ENCODE measurements at regions of chr9 and their contacts with region 1.

Region 1: DNA sequence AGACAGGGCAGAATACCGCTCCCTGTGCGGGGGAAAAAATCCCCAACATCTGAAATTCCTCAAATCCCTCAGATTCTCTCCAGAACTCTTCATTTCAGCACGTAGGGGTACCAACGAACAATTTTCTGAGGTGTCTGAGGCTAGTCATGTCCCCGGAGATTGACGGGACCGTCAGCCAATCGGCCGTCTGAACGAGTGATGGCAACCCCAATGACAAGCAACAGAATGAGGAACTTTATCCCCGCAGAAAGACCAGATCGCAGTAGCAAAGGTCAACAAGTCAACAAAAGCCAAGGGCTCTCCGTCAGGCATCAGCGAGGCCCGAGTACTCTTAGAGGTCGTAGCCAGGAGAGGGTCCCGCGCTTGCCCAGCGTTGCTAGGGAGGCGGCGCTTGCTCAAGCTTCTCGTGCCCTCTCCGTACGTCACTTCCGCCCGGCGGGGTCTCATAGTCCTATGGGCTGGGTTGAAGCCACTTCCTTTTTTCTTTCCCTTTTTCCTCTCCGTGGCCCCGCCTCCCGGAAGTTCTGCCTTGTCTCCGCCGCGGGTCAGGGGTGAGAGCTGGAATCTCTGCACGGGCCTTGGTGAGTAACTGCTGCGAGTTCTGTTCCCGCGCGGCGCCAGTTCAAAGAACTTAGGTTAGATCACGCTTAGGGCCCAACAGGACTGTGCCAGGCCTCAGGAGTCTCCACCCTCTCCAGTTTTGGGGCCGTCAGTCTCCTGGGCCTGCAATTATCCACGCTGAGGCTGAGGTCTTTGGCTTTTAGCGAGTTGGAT is at the start of gene RNF20:
- DNase-seq: peak; percentile 99
- H3K4me3 Mint-ChIP-seq: peak within 1 kb of the TSS; percentile 93
- H3K27ac Mint-ChIP-seq: peak within 1 kb of the TSS; percentile 98
- H3K4me1 Mint-ChIP-seq: peaks cover 12% of the 10 kb centered on the region
- H3K27me3 Mint-ChIP-seq: peaks cover 3% of the 10 kb centered on the region
- total RNA-seq, gene RNF20: 37.9 and 43.8 TPM in 2 replicates

Region 2: DNA sequence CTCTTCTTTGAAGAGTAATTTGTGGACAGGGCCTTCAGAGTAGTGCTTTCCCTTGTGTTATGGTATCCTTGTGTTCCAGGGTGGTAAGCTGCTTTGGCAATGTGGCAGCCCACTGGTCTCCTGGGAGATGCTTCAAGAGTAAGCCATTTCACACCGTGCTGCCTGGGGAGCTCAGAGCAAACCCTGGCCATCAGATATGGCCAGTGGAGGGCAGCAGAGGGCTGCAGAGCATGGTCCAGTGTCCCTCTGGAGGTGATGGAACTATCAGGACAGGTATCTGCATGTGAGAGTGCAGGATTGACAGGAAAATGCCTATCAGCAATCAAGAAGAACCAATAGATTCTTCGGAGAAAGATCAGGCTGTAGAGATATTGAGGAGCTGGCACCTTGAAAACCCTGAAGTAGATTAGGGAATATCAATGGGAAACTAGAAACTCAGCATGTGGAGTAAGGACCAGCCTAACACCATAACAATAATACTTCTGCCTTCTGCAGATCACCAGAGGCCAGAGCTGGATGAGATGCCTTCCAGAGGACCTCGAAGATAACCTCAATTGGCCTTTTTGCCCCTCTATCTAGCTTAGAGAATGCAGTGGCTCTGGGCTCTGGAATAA is 414.2 kb before region 1 on chr9:
- intact Hi-C with region 1: loop called (anchors 5 kb)
- DNase-seq: peak; percentile 70
- H3K4me3 Mint-ChIP-seq: no peak overlapping the region
- H3K27ac Mint-ChIP-seq: no peak overlapping the region
- H3K4me1 Mint-ChIP-seq: no peaks in the 10 kb centered on the region
- H3K27me3 Mint-ChIP-seq: no peaks in the 10 kb centered on the region

Region 3: DNA sequence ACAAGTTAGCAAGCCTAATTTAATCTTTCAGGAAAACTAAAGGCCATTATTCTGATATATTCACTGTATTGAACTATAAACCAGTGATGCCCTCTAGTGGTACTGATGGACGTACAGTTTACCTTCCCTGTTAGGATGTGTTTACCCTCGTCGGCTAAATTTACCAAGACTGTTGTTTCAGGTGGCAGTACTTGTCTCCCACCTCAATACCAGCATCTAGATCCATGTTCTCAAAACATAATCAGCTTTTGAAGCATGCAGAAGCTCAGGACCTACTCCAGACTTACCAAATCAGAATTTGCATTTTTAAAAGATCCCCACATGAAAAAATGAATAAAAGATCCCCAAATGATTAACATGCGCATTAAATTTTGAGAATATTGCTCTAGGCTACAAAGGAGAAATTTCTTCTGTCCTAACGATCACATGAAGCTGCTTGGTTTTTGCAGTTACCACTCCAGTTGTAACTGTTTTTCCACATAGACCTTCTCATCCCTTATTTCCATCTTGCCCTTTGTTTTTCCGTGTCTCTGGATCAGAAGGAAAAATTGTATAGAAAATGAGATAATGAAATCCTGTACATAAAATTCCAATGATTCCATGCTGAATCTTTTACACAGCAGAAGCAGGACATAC is 145.5 kb before region 1 on chr9:
- intact Hi-C with region 1: no loop called
- DNase-seq: no peak
- H3K4me3 Mint-ChIP-seq: no peak overlapping the region
- H3K27ac Mint-ChIP-seq: no peak overlapping the region
- H3K4me1 Mint-ChIP-seq: peaks cover 16% of the 10 kb centered on the region
- H3K27me3 Mint-ChIP-seq: no peaks in the 10 kb centered on the region

Region 4: DNA sequence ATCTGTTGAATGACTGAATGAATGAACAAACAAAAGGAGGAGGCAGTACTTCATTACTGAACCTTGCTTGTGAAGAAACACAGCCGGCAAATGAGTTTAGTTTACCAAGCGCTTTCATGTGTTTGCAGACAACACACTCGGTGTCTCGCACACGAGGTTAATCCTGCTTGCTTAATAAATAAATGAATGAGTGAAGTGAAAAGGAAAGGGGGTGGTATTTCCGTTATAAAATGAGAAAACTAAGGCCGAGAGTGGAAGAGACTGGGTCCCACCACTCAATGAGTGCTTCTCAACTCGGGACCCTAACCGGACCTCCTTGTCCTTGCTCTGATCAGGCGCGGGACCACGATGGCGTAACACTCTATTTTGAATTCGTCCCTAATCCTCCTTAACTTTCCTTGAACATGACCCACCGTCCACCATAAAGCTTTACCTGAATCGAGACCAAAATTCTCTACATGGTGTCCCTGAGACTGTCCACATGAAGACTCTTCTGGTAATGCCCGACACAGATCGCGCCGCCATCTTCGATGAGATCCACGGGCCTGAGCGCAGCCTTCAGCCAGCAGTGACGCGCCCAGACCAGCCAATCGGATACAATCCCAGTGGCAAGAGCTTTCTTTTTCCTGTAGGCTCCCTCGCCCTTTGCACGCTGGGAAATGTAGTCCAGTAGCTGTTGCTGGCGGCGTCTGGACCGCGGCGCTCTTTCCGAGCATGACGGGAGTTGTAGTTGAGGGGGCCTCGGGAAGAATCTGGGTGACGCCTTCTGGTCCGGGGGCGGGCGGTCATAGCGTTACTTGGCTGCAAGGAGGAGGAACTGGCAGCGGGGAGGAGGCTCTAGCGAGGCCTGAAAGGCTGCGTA is 135.2 kb before region 1 on chr9 and contains the starts of genes MRPL50 and ZNF189:
- intact Hi-C with region 1: loop called (anchors 1 kb)
- DNase-seq: peak; percentile 98
- H3K4me3 Mint-ChIP-seq: peak within 1 kb of the TSS; percentile 94
- H3K27ac Mint-ChIP-seq: peak within 1 kb of the TSS; percentile 98
- H3K4me1 Mint-ChIP-seq: peaks cover 44% of the 10 kb centered on the region
- H3K27me3 Mint-ChIP-seq: no peaks in the 10 kb centered on the region
- total RNA-seq, gene MRPL50: 18.6 and 19.8 TPM in 2 replicates
- total RNA-seq, gene ZNF189: 11.7 and 12.7 TPM in 2 replicates

Region 5: DNA sequence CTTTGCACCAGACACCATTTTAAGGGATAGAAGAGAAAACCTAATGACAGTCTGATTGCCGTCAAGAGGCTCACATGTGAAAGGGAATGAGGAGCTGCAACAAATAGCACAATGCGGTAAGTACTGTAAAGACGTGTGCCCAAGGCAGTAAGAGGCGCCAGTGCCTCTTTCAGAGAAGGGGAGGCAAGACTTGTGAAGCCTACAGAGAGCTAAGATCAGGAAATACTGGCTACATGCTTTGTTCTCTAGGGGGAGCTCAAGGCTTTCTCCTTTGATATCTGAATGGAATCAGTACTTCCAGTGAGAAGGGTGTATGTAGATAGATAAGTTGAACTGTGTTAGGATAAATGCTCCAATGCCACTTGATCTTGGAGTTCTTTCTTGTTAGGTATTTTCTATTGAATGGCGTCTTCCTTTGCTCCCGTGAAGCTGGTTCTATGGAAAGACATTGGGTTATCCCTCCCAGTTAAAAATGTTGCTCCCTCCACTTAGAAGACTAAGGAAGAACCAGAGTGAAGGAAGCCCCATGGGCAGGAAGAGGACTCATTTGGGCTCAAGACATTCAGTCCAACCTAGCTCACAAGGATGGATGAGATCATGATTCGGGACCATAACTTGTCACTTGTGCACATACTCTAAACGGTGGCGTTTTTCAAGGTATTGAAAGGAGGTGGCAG is 74.4 kb before region 1 on chr9:
- intact Hi-C with region 1: loop called (anchors 1 kb)
- DNase-seq: peak; percentile 76
- H3K4me3 Mint-ChIP-seq: no peak overlapping the region
- H3K27ac Mint-ChIP-seq: no peak overlapping the region
- H3K4me1 Mint-ChIP-seq: no peaks in the 10 kb centered on the region
- H3K27me3 Mint-ChIP-seq: peaks cover 10% of the 10 kb centered on the region

Region 6: GRCh38 chr9:101586651-101587050 is 53.1 kb after region 1 on chr9:
- intact Hi-C with region 1: loop called (anchors 1 kb)
- DNase-seq: peak; percentile 82
- H3K4me3 Mint-ChIP-seq: peak overlapping the region; percentile 7
- H3K27ac Mint-ChIP-seq: no peak overlapping the region
- H3K4me1 Mint-ChIP-seq: peaks cover 17% of the 10 kb centered on the region
- H3K27me3 Mint-ChIP-seq: peaks cover 3% of the 10 kb centered on the region